Psoas muscle (tissue), 8 donors: ENCODE measurements at regions of chr12 and their contacts with region 1.

Region 1: GRCh38 chr12:106392759-106393158 is 35.2 kb downstream of the POLR3B start:
- DNase-seq: no peak
- ATAC-seq: no peak
- H3K4me3 ChIP-seq: no peak overlapping the region
- H3K27ac ChIP-seq: no peak overlapping the region
- H3K4me1 ChIP-seq: no peaks in the 10 kb centered on the region
- H3K27me3 ChIP-seq: no peaks in the 10 kb centered on the region
- CTCF ChIP-seq: no peak

Region 2: GRCh38 chr12:106519607-106520021 is 126.9 kb after region 1 on chr12:
- intact Hi-C with region 1: no loop called
- DNase-seq: no peak
- ATAC-seq: no peak
- H3K4me3 ChIP-seq: no peak overlapping the region
- H3K27ac ChIP-seq: no peak overlapping the region
- H3K4me1 ChIP-seq: no peaks in the 10 kb centered on the region
- H3K27me3 ChIP-seq: peaks cover 0 to 9% (median 0%) of the 10 kb centered on the region in 3 donors
- CTCF ChIP-seq: no peak

Region 3: GRCh38 chr12:106709068-106709511 is 316.3 kb after region 1 on chr12:
- intact Hi-C with region 1: no loop called
- DNase-seq: no peak
- ATAC-seq: no peak
- H3K4me3 ChIP-seq: no peak overlapping the region
- H3K27ac ChIP-seq: no peak overlapping the region
- H3K4me1 ChIP-seq: no peaks in the 10 kb centered on the region
- H3K27me3 ChIP-seq: peaks cover 0 to 3% (median 0%) of the 10 kb centered on the region in 3 donors
- CTCF ChIP-seq: no peak

Region 4: DNA sequence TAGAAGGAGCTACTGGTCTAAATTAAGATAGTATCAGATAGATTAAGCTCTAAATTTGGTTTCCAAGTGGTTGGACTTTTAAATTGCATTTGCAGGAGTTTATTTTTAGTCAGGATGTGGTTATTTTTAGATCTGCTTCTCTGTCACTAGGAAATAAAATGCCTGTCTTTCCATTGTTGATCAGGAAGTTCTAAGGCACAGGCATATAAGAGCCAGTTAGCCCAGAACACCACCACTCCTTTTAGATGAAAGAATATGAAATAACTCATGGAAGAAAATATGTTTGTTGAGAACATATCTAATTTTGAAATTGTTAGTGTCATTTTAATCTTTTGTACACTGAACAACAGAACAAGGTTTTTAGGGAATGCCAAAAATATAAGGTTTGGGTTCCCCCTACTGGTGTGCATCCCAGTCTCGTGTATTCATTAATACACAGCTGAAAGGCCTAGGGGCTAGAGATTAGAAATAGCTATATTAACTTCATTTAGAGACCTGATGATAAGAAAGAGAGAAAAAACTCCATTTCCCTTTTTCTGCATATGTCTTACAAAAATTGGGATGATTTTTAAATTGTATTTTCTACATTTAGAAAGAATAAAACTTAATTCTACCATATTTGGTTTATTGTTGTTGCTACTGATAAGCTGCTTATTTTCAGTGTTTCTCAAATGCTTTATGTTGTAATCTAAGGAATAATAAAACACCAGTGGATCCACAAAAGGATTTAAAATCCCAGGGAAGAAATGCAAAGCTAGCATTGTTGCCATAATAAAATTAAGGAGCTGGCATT is 448.9 kb after region 1 on chr12:
- intact Hi-C with region 1: loop called (anchors 5 kb)
- DNase-seq: no peak
- ATAC-seq: peak in 3 of 4 donors; percentile 65 to 94 (median 78)
- H3K4me3 ChIP-seq: no peak overlapping the region
- H3K27ac ChIP-seq: peak overlapping the region; percentile 3
- H3K4me1 ChIP-seq: peaks cover 32% of the 10 kb centered on the region
- H3K27me3 ChIP-seq: no peaks in the 10 kb centered on the region
- CTCF ChIP-seq: peak; percentile 53

Region 5: GRCh38 chr12:107242189-107242588 is 849.4 kb after region 1 on chr12:
- intact Hi-C with region 1: no loop called
- DNase-seq: no peak
- ATAC-seq: no peak
- H3K4me3 ChIP-seq: no peak overlapping the region
- H3K27ac ChIP-seq: no peak overlapping the region
- H3K4me1 ChIP-seq: no peaks in the 10 kb centered on the region
- H3K27me3 ChIP-seq: peaks cover 0 to 4% (median 3%) of the 10 kb centered on the region in 3 donors
- CTCF ChIP-seq: no peak